ENCODE measurements at regions of chr11 and their contacts with region 1.

Region 1: GRCh38 chr11:20599221-20600019 is at the start of gene SLC6A5:
- DNase-seq: no peak
- H3K4me3 Mint-ChIP-seq: no peak within 1 kb of the TSS
- H3K27ac Mint-ChIP-seq: peak within 1 kb of the TSS; percentile 40
- H3K4me1 Mint-ChIP-seq: no peaks in the 10 kb centered on the region
- H3K27me3 Mint-ChIP-seq: peaks cover 77% of the 10 kb centered on the region
- total RNA-seq, gene SLC6A5: not detected in 2 replicates

Region 2: GRCh38 chr11:20671856-20672546 is 72.6 kb after region 1 on chr11:
- intact Hi-C with region 1: loop called (anchors 5 kb)
- DNase-seq: no peak
- H3K4me3 Mint-ChIP-seq: no peak overlapping the region
- H3K27ac Mint-ChIP-seq: no peak overlapping the region
- H3K4me1 Mint-ChIP-seq: no peaks in the 10 kb centered on the region
- H3K27me3 Mint-ChIP-seq: peaks cover 53% of the 10 kb centered on the region

Measured in activated T-helper 1 cell treated with anti-CD3 and anti-CD28 coated beads, Interleukin-12 subunit alpha, Interleukin-12 subunit beta, Interleukin-2, Interleukin-4 antibody, amounts not matched to agents 30 ng/mL and 10 ng/mL and 1 ng/mL, durations not matched to agents 14 hours and 24 hours and 36 hours (primary cell).